HepG2 (cell line): ENCODE measurements at regions of chr17 and their contacts with region 1.

Region 1: DNA sequence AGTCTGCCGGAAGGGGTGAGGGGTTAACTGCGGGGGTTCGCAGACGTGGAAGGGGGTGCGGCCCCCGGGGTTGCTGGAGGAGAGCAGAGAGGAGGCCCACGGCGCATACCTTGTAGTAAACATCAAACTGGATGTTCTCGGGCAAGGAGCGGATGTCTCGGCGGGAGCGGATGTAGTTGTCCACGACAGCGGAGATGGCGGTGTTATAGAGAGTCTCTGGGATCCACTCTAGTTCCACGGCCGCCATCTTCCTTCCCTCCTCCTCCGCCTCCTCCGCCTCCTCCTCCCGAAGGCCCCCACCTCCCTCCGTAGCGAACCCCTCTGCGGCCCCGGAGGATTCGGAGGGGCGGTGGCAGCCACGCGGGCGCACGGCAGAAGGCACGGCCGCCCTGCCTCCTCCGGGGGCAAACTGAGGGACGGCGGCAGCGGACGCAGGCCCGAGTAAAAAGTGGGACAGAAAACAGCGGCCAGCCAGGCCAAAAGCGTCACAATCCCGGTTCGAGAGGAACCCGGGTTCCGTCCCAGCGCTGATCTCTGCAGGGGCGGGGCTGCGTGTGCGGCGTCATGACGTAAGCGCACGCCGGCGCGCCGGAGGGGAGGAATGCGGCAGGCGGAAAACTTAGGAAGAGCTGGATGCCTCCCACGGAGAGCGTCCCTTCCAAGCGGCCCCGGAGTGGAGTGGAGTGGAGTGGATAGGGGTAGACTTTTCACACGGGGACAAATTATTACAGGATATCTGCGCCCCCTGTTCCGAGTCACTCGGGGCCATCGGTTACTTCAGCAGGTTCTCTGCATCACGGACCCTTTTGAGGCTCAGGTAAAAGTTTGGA is at the start of gene APPBP2:
- DNase-seq: peak; percentile 83
- ATAC-seq: peak; percentile 96
- H3K4me3 ChIP-seq: peak within 1 kb of the TSS; percentile 93 to 98 (median 95)
- H3K27ac ChIP-seq: peak within 1 kb of the TSS; percentile 96
- H3K4me1 ChIP-seq: peaks cover 38% of the 10 kb centered on the region
- H3K27me3 ChIP-seq: peaks cover 0 to 4% of the 10 kb centered on the region in 2 experiments; a peak in 1 of 5 replicates
- CTCF ChIP-seq: 0 out of 2 replicates have a peak, but pooled peaks have one; percentile 19
- EP300 ChIP-seq: peak in 1 of 2 experiments; percentile 28; a peak in 2 of 4 replicates
- POLR2A ChIP-seq: peak; percentile 91 to 94
- RAD21 ChIP-seq: peak; percentile 51
- total RNA-seq, gene APPBP2: 45.8 and 68.8 TPM in 2 replicates

Region 2: DNA sequence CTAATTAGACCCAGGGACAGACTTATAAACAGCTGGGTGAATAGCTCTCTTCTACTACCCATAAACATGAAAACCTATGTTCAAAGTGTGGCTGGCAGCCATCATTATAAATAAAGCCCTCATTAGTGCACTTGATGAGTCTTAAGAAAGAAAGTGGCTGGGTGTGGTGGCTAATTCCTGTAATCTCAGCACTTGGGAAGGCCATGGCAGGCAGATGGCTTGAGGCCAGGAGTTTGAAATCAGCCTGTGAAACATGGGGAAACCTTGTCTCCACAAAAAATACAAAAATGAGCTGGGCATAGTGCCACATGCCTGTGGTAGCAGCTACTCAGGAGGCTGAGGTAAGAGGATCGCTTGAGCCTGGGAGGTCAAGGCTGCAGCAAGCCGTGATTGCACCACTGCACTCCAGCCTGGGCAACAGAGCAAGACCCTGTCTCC is 28.5 kb after region 1 on chr17:
- CTCF ChIA-PET with region 1: no interaction called
- POLR2A ChIA-PET with region 1: interaction called, 38 read pairs
- in situ Hi-C with region 1: no loop called
- intact Hi-C with region 1: no loop called
- DNase-seq: no peak
- ATAC-seq: no peak
- H3K4me3 ChIP-seq: no peak overlapping the region
- H3K27ac ChIP-seq: no peak overlapping the region
- H3K4me1 ChIP-seq: peaks cover 17% of the 10 kb centered on the region
- H3K27me3 ChIP-seq: no peaks in the 10 kb centered on the region
- CTCF ChIP-seq: no peak
- EP300 ChIP-seq: no peak
- POLR2A ChIP-seq: no peak
- RAD21 ChIP-seq: no peak

Region 3: DNA sequence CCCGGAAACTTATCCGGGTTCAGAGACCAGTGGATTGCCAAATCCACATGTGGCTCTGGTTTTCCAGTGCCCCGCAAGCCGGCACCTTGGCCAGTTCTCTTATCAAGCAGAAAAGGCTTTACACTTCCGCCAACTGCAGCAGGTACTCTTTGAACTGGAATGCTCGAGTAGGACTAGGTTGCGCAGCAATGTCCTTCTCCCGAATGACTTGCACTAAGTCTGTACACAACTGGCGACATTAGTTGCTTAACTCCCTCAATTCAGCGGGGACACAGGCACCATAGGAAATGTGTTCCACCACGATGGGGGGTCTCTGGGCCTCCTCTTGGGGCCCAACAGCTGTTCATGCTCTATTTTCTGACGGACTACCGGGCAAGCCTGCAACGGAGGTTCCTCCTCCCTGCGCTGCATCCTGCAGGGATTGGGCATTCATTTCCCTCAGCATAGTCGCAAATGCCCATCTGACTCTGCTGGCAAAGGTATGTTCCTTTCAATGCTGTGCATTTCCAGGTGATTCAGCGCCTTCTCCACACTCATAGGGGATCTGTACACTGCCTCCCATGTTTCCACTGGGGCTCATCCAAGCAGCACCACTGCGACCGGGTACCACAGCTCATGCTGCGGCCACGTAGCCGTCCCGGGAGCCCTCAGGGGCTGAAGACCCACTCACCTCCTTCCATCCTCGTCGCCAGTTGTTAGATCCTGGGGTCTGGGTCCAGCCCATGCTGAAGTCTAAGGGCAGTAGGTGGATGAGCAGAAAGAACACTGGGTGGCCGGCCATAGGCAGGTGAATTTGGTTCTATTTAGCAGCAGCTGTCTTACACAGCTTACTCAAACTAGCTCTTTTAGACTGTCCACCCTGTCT is 34.3 kb after region 1 on chr17:
- CTCF ChIA-PET with region 1: no interaction called
- POLR2A ChIA-PET with region 1: interaction called, 38 read pairs
- in situ Hi-C with region 1: no loop called
- intact Hi-C with region 1: loop called (anchors 2 kb)
- DNase-seq: peak; percentile 92
- ATAC-seq: peak; percentile 88
- H3K4me3 ChIP-seq: peak overlapping the region; percentile 61 to 77 (median 64)
- H3K27ac ChIP-seq: peak overlapping the region; percentile 82
- H3K4me1 ChIP-seq: peaks cover 38% of the 10 kb centered on the region
- H3K27me3 ChIP-seq: no peaks in the 10 kb centered on the region; a peak in 1 of 5 replicates
- CTCF ChIP-seq: peak; percentile 11; the same call in 1 of the 2 replicates
- EP300 ChIP-seq: peak; percentile 40 to 68; a peak in 2 of 4 replicates
- POLR2A ChIP-seq: peak; percentile 62 to 87
- RAD21 ChIP-seq: no peak; the same call in 1 of the 2 replicates